ENCODE measurements at regions of chr5 and their contacts with region 1.

Region 1: DNA sequence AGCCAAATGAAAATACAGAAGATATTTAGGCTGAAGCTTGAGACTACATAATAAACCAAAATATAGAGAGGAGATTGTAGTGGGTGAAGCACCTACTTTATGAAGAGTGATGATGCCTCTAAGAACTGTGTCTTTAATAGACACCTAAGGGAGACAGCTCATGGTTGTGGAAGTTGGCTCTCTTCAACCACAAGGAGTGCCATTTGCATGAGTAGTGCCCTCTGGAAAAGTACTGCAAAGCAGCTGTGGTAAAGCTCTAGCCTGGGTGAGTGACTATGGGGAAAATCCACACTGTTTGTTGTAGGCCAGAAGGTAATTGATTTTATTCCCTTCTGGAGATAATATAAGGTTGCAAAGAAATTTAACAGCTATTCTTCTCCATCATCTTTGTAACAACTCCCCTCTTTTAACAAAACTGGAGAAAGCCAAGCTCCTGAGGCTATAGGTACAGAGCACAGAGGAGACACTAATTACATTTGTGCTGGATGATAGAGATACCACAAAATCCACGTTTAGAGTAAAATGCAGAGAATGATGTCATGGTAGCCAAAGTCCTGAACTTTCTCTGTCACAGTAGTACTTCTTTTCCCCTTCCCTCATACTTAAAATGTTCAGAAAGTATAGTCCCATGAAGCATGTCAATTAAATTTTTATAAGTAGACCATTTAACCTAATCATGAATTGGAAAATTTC is 122.8 kb downstream of the STARD4 start:
- DNase-seq: no peak
- ATAC-seq: no peak
- H3K4me3 ChIP-seq: no peak overlapping the region
- H3K4me3 Mint-ChIP-seq: no peak overlapping the region
- H3K27ac ChIP-seq: no peak overlapping the region
- H3K27ac Mint-ChIP-seq: no peak overlapping the region
- H3K4me1 ChIP-seq: no peaks in the 10 kb centered on the region
- H3K4me1 Mint-ChIP-seq: peaks cover 22% of the 10 kb centered on the region
- H3K27me3 ChIP-seq: no peaks in the 10 kb centered on the region
- H3K27me3 Mint-ChIP-seq: no peaks in the 10 kb centered on the region
- CTCF ChIP-seq: no peak

Region 2: GRCh38 chr5:111439473-111440075 is 50.0 kb after region 1 on chr5:
- CTCF ChIA-PET with region 1: no interaction called
- POLR2A ChIA-PET with region 1: no interaction called
- intact Hi-C with region 1: no loop called
- DNase-seq: no peak
- ATAC-seq: no peak
- H3K4me3 ChIP-seq: no peak overlapping the region
- H3K4me3 Mint-ChIP-seq: no peak overlapping the region
- H3K27ac ChIP-seq: no peak overlapping the region
- H3K27ac Mint-ChIP-seq: peak overlapping the region; percentile 40
- H3K4me1 ChIP-seq: no peaks in the 10 kb centered on the region
- H3K4me1 Mint-ChIP-seq: peaks cover 37% of the 10 kb centered on the region
- H3K27me3 ChIP-seq: no peaks in the 10 kb centered on the region
- H3K27me3 Mint-ChIP-seq: no peaks in the 10 kb centered on the region
- CTCF ChIP-seq: no peak

Region 3: GRCh38 chr5:111478266-111478665 is 88.7 kb after region 1 on chr5:
- CTCF ChIA-PET with region 1: no interaction called
- POLR2A ChIA-PET with region 1: no interaction called
- intact Hi-C with region 1: no loop called
- DNase-seq: no peak
- ATAC-seq: no peak
- H3K4me3 ChIP-seq: no peak overlapping the region
- H3K4me3 Mint-ChIP-seq: no peak overlapping the region
- H3K27ac ChIP-seq: no peak overlapping the region
- H3K27ac Mint-ChIP-seq: no peak overlapping the region
- H3K4me1 ChIP-seq: no peaks in the 10 kb centered on the region
- H3K4me1 Mint-ChIP-seq: no peaks in the 10 kb centered on the region
- H3K27me3 ChIP-seq: no peaks in the 10 kb centered on the region
- H3K27me3 Mint-ChIP-seq: no peaks in the 10 kb centered on the region
- CTCF ChIP-seq: no peak

Region 4: DNA sequence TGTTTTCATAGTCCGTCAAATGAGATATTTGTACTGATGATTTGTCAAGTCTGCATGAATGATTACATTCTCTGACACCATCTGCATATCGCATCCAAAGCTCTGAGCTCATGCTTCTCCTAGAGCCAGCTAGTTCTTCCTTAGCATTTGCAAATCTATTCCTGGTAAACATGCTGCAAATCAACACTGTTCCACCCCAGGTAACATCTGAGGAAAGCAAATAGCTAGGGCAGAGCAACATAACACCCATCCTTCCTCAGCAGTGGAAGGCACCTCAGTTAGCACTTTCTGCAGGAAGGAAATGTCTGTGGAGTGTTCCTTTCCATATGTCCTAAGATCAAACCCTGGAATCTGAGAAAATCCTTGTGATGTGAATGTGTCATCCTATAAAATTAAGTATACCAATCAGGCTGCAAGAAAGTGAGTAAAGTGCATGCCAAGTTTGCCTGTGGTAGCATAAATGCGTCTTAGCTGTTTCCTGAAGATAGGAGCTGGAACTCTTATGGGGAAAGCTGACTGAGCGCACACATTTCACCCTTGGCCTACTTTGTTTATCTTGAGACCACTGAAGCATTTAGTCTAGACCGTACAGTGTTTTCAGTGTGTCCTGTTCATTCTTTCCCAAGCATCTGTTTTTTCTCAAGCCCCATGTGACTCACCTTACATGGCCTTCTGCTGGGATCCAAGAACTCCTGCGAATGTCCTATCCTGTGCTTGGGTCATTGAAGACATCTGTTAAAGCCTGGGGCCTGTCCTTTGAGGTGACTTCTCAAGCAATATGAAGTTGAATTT is 173.7 kb after region 1 on chr5:
- CTCF ChIA-PET with region 1: no interaction called
- POLR2A ChIA-PET with region 1: no interaction called
- intact Hi-C with region 1: no loop called
- DNase-seq: no peak
- ATAC-seq: no peak
- H3K4me3 ChIP-seq: no peak overlapping the region
- H3K4me3 Mint-ChIP-seq: no peak overlapping the region
- H3K27ac ChIP-seq: no peak overlapping the region
- H3K27ac Mint-ChIP-seq: no peak overlapping the region
- H3K4me1 ChIP-seq: no peaks in the 10 kb centered on the region
- H3K4me1 Mint-ChIP-seq: no peaks in the 10 kb centered on the region
- H3K27me3 ChIP-seq: no peaks in the 10 kb centered on the region
- H3K27me3 Mint-ChIP-seq: peaks cover 10% of the 10 kb centered on the region
- CTCF ChIP-seq: no peak

Region 5: DNA sequence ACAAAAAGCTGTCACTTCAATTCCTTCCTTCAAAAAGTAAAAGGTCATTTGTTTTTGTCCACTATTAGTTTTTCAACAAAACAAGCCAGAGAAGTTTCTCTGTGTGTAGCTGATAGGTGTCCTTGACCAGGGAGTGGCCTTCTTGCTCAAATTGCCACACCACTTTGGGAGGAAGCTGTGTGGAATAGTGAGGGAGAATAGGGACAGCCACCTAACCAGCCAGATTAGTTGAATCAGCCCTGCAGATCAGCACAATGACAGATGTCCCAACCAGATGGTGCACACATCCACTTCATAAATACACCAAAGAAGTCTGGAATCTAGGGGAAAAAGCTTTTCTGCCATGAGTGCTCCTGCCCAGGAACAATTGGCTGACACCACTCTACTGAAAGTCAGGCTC is 330.2 kb after region 1 on chr5:
- CTCF ChIA-PET with region 1: no interaction called
- POLR2A ChIA-PET with region 1: no interaction called
- intact Hi-C with region 1: loop called in 1 of 2 experiments (anchors 5 kb)
- DNase-seq: no peak
- ATAC-seq: no peak
- H3K4me3 ChIP-seq: no peak overlapping the region
- H3K4me3 Mint-ChIP-seq: no peak overlapping the region
- H3K27ac ChIP-seq: no peak overlapping the region
- H3K27ac Mint-ChIP-seq: no peak overlapping the region
- H3K4me1 ChIP-seq: no peaks in the 10 kb centered on the region
- H3K4me1 Mint-ChIP-seq: no peaks in the 10 kb centered on the region
- H3K27me3 ChIP-seq: peaks cover 0 to 4% of the 10 kb centered on the region in 2 experiments
- H3K27me3 Mint-ChIP-seq: peaks cover 8% of the 10 kb centered on the region
- CTCF ChIP-seq: no peak

Measured in CD4-positive, alpha-beta T cell (primary cell).